ENCODE measurements at regions of chr6 and their contacts with region 1.

Region 1: DNA sequence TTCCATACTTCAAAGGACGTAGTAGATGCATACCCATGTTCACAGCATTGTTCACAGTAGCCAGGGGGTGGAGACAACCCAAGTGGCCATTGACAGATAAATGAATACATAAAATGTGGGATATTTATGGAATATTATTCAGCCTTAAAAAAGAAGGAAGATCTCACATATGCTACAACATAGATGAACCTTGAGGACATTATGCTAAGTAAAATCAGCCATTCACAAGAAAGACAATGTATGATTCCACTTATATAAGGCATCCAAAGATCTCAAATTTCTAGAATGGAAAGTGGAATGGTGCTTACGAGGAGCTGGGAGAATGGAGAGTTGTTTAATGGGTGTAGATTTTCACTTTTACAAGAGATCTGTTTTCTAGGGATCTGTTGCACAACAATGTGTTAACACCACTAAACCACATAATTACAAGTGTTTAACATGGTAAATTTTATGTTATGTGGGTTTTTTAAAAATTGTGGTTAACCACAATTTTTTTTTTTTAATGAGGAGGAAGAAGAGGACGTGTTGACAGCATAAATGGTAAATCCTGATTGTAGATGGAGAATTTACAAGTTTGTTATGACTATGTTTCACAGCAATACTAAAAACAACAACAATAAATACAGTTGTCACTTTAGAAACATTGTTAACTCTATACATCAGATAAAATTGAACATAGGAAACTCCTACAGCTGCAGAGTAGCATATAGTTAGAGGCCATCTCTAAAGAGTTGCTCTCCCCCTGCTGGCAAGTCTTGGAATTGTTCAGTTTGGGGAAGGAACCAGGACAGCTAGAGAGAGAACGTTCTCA is 41.6 kb downstream of the CCN2 start:
- DNase-seq: peak; percentile 67 to 80
- H3K4me3 ChIP-seq: no peak overlapping the region
- H3K27ac ChIP-seq: no peak overlapping the region
- H3K4me1 ChIP-seq: no peaks in the 10 kb centered on the region
- H3K27me3 ChIP-seq: no peaks in the 10 kb centered on the region
- CTCF ChIP-seq: peak; percentile 84 to 89

Region 2: GRCh38 chr6:131694831-131695426 is 214.7 kb before region 1 on chr6:
- intact Hi-C with region 1: loop called (anchors 5 kb)
- DNase-seq: peak in 1 of 2 donors; percentile 27
- H3K4me3 ChIP-seq: no peak overlapping the region
- H3K27ac ChIP-seq: no peak overlapping the region
- H3K4me1 ChIP-seq: no peaks in the 10 kb centered on the region
- H3K27me3 ChIP-seq: no peaks in the 10 kb centered on the region
- CTCF ChIP-seq: peak; percentile 76 to 86

Region 3: GRCh38 chr6:132020138-132020581 is 110.5 kb after region 1 on chr6:
- intact Hi-C with region 1: no loop called
- DNase-seq: peak; percentile 62 to 79
- H3K4me3 ChIP-seq: no peak overlapping the region
- H3K27ac ChIP-seq: peak overlapping the region; percentile 57 to 63
- H3K4me1 ChIP-seq: peaks cover 0 to 29% (median 11%) of the 10 kb centered on the region in 4 donors
- H3K27me3 ChIP-seq: no peaks in the 10 kb centered on the region
- CTCF ChIP-seq: no peak